Breast epithelium (tissue), 4 donors: ENCODE measurements at regions of chr13 and their contacts with region 1.

Region 1: DNA sequence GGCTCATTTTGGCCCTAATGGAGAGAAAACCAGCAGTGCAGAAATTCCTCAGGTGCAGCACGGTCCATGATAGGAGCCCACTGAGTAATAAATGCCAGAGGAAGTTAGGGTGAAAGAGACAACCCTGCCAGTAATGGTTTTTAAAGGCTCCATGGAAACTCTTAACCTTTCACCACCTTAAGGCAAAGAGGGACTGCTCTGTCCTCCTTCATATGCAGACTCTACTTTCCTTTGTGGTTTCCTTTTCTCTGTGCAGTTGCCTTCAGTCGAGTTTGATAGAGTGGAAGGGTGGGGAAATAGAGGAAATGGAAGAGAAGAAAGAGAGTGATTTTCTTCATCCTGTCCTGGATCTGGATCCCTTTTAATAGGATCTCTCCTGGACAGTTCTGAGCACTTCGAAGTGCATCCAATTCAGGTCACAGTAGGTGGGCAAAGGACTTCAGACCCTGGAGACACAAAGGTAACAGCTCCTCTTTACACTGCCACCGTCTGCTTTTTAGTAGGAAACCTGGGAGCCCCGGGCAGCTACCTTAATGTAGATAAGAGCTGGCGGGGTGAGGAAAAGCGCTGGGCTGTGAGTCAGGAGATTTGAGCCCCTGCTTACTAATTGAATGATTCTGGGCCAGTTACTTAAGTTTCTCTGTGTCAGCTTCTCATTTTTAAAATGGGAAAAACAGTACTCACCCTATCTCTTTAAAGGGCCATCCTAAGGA is 294.8 kb downstream of the KCNRG start:
- DNase-seq: no peak
- H3K4me3 ChIP-seq: no peak overlapping the region
- H3K27ac ChIP-seq: no peak overlapping the region
- H3K4me1 ChIP-seq: no peaks in the 10 kb centered on the region
- H3K27me3 ChIP-seq: no peaks in the 10 kb centered on the region
- CTCF ChIP-seq: no peak
- POLR2A ChIP-seq: no peak

Region 2: GRCh38 chr13:50255639-50256038 is 54.4 kb before region 1 on chr13:
- intact Hi-C with region 1: no loop called
- DNase-seq: no peak
- H3K4me3 ChIP-seq: no peak overlapping the region
- H3K27ac ChIP-seq: no peak overlapping the region
- H3K4me1 ChIP-seq: no peaks in the 10 kb centered on the region
- H3K27me3 ChIP-seq: no peaks in the 10 kb centered on the region
- CTCF ChIP-seq: no peak
- POLR2A ChIP-seq: no peak

Region 3: GRCh38 chr13:50326811-50327210 is 16.8 kb after region 1 on chr13:
- intact Hi-C with region 1: loop called (anchors 1 kb)
- DNase-seq: no peak
- H3K4me3 ChIP-seq: no peak overlapping the region
- H3K27ac ChIP-seq: no peak overlapping the region
- H3K4me1 ChIP-seq: no peaks in the 10 kb centered on the region
- H3K27me3 ChIP-seq: no peaks in the 10 kb centered on the region
- CTCF ChIP-seq: no peak
- POLR2A ChIP-seq: no peak

Region 4: DNA sequence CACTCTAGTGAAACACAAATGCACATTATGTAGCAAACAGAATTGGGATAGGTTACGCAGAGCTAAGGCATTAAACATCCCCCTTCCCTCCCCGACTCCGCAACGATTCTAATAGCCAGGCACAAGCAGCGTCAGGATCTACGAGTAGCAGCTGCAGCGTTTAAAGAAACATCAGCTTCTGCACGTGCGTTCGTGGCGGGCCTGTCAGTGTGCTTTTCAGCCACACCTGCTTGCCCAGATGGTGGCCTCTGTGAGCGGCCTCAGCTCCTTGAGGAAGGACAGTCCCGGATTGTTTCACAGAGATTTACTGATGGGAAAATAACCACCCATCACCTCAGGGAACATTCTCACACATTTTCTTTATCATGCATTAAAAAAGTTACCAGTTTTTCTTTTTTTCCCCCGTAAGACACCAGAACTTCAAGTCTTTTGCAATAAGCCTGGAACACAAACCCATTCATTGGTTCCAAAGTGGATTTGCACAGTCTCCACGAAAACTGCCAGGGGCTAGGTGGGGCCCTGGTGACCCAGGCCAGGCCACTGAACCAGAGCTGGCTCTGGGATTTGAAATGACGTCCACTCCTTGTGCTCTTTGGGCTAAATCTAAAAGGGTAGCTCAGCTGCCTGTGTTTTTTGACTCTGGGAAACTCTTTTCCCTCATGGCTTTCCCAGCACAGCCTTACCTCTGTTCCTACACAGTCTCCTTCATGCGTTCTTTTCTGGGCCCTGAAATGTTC is 30.7 kb after region 1 on chr13:
- intact Hi-C with region 1: no loop called
- DNase-seq: no peak
- H3K4me3 ChIP-seq: no peak overlapping the region
- H3K27ac ChIP-seq: no peak overlapping the region
- H3K4me1 ChIP-seq: no peaks in the 10 kb centered on the region
- H3K27me3 ChIP-seq: no peaks in the 10 kb centered on the region
- CTCF ChIP-seq: no peak
- POLR2A ChIP-seq: no peak

Region 5: DNA sequence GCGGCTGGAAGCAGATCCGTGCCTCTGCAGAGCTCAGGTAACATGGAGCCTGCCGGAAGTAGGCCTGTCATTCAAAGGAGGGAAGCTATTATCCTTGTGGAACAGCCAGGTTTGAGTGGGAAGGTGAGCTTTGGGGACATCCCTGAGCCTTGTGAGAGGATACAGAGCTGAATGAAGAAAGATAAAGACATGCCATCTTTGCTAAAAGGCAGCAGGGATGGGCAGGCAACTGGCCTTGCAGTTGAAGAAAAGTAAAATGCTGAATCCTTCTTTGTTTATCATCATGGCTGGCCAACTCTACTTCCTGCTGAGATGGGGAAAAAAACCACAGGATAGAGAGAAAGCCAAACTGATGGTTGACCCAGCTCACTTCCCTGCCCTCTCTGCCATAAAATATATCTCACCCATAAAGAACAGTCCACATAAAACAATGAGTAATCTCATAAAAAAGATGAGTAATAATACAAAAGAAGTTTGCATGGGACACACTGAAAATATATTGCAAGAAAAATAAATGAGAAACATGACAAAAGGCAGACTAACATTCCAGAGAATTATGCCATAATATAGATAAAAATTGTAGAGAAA is 307.2 kb after region 1 on chr13:
- intact Hi-C with region 1: no loop called
- DNase-seq: no peak
- H3K4me3 ChIP-seq: no peak overlapping the region
- H3K27ac ChIP-seq: no peak overlapping the region
- H3K4me1 ChIP-seq: no peaks in the 10 kb centered on the region
- H3K27me3 ChIP-seq: no peaks in the 10 kb centered on the region
- CTCF ChIP-seq: no peak
- POLR2A ChIP-seq: no peak

Region 6: GRCh38 chr13:50645092-50645491 is 335.1 kb after region 1 on chr13:
- intact Hi-C with region 1: no loop called
- DNase-seq: no peak
- H3K4me3 ChIP-seq: no peak overlapping the region
- H3K27ac ChIP-seq: no peak overlapping the region
- H3K4me1 ChIP-seq: no peaks in the 10 kb centered on the region
- H3K27me3 ChIP-seq: no peaks in the 10 kb centered on the region
- CTCF ChIP-seq: no peak
- POLR2A ChIP-seq: no peak